ENCODE measurements at regions of chr5 and their contacts with region 1.

Region 1: DNA sequence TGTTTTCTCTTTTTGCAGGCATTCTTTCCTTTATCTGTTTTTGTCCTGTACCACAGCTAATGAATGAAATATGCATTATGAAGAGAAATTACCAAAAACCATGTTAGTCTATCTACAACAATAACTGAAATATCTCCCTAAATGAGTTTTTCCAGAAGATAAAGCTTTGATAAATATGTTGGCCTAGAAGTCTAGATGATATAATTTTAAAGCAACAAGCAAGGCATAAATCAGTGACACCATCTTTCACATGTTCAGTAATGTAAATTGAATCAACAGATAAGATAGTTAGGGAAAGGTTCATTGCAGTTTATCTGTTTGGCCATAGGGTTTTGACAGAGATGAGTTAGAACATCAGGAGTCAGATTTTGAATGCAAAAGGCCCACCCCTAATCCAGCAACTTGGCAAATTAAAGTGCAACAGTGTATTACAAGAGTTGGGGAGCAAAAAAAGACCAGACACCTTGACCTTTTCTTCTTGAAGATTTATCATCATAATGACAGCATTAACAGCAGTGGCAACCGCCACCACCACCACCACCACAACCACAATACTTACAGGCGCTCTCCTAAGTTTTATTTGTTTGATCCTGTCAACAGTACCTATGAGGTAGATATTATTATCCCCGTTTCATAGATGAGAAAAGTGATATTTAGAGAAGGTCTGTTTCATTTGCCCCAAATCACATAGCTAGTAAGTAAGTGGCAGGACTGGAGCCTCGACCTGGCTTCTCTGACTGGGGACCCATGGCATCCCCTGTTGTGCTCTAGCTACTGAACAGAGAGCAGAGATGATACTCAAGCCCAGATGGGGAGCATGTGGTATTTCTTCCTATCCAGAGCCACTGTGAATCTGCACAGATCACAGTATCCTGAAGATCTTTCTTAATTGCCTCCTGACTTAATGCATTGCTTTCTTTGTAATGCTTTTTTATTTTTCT is 122.8 kb upstream of the DHFR start:
- DNase-seq: no peak
- ATAC-seq: no peak
- H3K4me3 ChIP-seq: no peak overlapping the region
- H3K27ac ChIP-seq: no peak overlapping the region
- H3K4me1 ChIP-seq: no peaks in the 10 kb centered on the region
- H3K27me3 ChIP-seq: no peaks in the 10 kb centered on the region
- CTCF ChIP-seq: no peak
- POLR2A ChIP-seq: no peak

Region 2: GRCh38 chr5:80697100-80697499 is 80.5 kb before region 1 on chr5:
- intact Hi-C with region 1: loop called in 1 of 10 experiments (anchors 2 kb)
- DNase-seq: no peak
- ATAC-seq: no peak
- H3K4me3 ChIP-seq: no peak overlapping the region
- H3K27ac ChIP-seq: no peak overlapping the region
- H3K4me1 ChIP-seq: peaks cover 0 to 3% (median 0%) of the 10 kb centered on the region in 12 donors
- H3K27me3 ChIP-seq: no peaks in the 10 kb centered on the region
- CTCF ChIP-seq: no peak
- POLR2A ChIP-seq: no peak

Region 3: GRCh38 chr5:80822640-80823039 is 45.0 kb after region 1 on chr5:
- intact Hi-C with region 1: no loop called
- DNase-seq: no peak
- ATAC-seq: no peak
- H3K4me3 ChIP-seq: no peak overlapping the region
- H3K27ac ChIP-seq: no peak overlapping the region
- H3K4me1 ChIP-seq: peaks cover 0 to 10% (median 6%) of the 10 kb centered on the region in 12 donors
- H3K27me3 ChIP-seq: no peaks in the 10 kb centered on the region
- CTCF ChIP-seq: no peak
- POLR2A ChIP-seq: no peak